Activated CD8-positive, alpha-beta memory T cell treated with anti-CD3 and anti-CD28 coated beads, Interleukin-2, amount 10 ng/mL, durations not matched to agents 7 days and 5 days (primary cell): ENCODE measurements at regions of chr19 and their contacts with region 1.

Region 1: GRCh38 chr19:12847159-12848139 is 9.1 kb downstream of the MAST1 start:
- DNase-seq: peak; percentile 87
- ATAC-seq: peak; percentile 97
- H3K4me3 Mint-ChIP-seq: peak overlapping the region; percentile 35
- H3K27ac Mint-ChIP-seq: no peak overlapping the region
- H3K4me1 Mint-ChIP-seq: peaks cover 8% of the 10 kb centered on the region
- H3K27me3 Mint-ChIP-seq: peaks cover 22% of the 10 kb centered on the region

Region 2: DNA sequence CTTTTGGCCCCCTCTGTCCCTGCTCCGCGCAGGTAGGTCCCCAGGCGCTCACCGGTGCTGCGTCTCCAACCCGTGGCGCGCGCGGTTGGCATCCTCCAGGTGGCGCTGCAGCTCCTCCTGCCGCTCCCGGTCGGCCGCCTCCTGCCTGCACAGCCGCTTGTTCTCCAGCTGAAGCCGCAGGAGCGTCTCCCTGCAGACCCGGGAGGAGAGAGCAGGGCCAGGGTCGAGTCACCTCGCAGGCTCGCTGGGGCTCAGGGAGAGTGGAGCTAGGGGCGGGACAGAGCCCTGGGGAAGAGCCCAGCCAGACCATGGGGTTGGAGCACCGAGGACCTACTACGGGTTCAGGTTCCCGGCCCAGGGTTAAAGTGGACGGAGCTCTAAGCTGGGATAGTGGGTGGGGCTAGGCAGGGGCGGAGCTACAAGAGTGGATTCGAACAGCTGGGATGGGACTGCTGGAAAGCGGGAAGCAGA is 81.4 kb before region 1 on chr19:
- CTCF ChIA-PET with region 1: interaction called, 146 read pairs
- DNase-seq: peak; percentile 87
- ATAC-seq: peak; percentile 87
- H3K4me3 Mint-ChIP-seq: peak overlapping the region; percentile 24
- H3K27ac Mint-ChIP-seq: no peak overlapping the region
- H3K4me1 Mint-ChIP-seq: peaks cover 9% of the 10 kb centered on the region
- H3K27me3 Mint-ChIP-seq: no peaks in the 10 kb centered on the region

Region 3: DNA sequence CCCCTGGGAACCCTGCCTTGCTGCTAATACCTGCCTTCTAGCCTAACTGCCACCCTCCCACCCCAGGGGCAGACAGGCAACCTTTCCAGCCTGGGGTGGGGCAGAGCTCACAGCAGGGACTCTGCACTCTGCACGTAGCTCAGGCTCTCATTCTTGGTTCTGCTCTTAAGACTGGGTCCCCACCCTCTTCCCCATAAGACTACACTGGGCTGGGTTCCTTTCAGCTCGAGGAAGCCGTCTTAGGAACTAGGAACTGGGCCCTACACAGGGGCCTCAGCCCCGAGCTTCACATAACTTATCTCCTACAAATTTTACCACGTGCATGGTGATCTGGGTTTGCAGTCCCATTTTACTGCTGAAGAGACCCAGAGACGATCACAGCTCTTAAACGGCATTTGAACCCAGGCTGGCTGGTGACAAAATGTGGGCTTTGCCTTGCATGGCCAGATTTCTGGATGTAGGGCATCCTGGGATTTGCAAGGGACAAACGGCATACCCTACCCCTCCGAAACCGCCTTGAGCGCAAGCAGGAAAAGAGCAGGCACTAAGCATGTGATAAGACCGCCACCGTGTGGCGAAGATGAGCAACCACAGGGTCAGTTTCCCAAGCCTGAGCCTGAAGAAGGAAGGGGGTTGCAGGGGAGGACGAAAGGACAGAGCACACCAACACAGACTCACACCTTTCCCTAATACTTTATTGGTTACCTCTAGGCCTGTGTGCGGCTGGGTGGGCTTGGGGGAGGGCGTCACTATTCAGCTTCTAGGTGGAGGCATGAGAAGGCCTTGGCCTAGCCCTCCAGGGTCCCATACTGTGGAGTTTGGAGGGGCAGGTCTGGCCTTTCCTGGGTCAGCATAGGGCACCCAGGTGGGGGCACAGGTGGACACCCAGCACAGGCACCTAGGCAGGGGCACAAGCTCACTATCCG is 51.0 kb before region 1 on chr19:
- CTCF ChIA-PET with region 1: interaction called, 18 read pairs
- DNase-seq: peak; percentile 82
- ATAC-seq: no peak
- H3K4me3 Mint-ChIP-seq: peak overlapping the region; percentile 51
- H3K27ac Mint-ChIP-seq: peak overlapping the region; percentile 81
- H3K4me1 Mint-ChIP-seq: peaks cover 35% of the 10 kb centered on the region
- H3K27me3 Mint-ChIP-seq: no peaks in the 10 kb centered on the region

Region 4: DNA sequence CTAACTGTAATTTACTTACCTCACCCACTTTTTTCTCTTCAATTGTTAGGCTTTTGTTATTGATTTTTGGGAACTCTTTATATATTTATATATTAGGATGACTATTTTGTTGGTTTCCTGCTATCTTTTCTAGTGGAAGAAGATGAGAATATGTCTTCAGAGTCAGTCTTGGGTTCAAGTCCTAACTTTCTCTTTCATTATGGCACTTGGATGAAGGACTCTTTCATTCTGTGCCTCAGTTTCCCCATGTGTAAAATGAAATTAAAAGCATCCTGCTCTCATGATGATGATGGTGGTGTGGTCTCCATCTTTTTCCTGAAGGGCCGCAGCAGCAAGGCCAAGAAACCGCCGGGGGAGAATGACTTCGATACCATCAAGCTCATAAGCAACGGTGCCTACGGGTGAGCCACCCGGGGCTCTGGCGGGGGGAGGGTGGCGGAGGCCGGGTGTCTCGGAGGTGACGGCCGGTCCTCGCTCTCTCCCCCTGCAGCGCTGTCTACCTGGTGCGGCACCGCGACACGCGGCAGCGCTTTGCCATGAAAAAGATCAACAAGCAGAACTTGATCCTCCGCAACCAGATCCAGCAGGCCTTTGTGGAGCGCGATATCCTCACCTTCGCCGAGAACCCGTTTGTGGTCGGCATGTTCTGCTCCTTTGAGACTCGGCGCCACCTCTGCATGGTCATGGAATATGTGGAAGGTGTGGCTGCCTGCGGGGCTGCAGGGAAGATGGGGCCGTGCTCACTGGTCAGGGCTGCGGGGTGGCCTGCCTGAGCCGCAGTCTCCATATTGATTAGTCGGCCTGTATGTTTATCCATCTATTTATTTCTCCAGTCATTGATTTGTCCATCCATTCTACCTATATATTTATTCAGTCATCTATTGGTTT is 10.8 kb after region 1 on chr19:
- CTCF ChIA-PET with region 1: interaction called, 24 read pairs
- DNase-seq: no peak
- ATAC-seq: no peak
- H3K4me3 Mint-ChIP-seq: no peak overlapping the region
- H3K27ac Mint-ChIP-seq: no peak overlapping the region
- H3K4me1 Mint-ChIP-seq: no peaks in the 10 kb centered on the region
- H3K27me3 Mint-ChIP-seq: peaks cover 2% of the 10 kb centered on the region

Region 5: DNA sequence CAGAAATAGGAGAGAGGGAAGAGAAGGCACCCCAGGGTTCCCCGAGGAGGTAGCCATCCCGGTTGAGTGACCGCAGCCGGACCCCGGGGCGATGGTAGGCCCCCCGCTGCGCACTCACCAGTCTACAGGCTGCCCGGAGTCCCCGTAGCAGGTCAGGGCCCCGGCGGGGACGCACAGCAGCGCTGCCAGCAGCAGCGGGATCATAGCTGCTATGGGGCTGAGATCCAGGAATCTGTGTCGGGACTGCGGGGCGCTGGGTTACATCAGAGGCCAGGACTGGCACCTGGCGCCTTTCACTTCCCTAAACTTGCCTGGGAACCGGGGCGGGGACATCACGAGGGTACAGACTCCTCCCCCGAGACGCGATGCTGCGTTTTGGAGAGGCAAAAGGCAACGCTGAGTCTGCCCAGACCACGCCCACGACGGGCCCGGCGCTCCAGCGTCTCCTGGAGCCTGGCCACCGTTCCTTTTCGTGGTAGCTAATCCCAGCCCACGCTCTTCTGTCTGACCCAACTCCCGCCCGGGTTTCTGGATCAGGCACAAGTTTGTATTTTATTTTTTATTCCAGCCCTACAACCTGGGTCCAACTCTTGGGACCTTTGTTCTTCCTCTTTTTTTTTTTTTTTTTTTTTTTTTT is 33.8 kb after region 1 on chr19 and contains the start of gene DNASE2:
- CTCF ChIA-PET with region 1: interaction called, 21 read pairs
- DNase-seq: peak; percentile 96
- ATAC-seq: peak; percentile 83
- H3K4me3 Mint-ChIP-seq: peak within 1 kb of the TSS; percentile 87
- H3K27ac Mint-ChIP-seq: peak within 1 kb of the TSS; percentile 87
- H3K4me1 Mint-ChIP-seq: peaks cover 38% of the 10 kb centered on the region
- H3K27me3 Mint-ChIP-seq: no peaks in the 10 kb centered on the region
- total RNA-seq, gene DNASE2: 32.5 to 34.1 TPM

Region 6: DNA sequence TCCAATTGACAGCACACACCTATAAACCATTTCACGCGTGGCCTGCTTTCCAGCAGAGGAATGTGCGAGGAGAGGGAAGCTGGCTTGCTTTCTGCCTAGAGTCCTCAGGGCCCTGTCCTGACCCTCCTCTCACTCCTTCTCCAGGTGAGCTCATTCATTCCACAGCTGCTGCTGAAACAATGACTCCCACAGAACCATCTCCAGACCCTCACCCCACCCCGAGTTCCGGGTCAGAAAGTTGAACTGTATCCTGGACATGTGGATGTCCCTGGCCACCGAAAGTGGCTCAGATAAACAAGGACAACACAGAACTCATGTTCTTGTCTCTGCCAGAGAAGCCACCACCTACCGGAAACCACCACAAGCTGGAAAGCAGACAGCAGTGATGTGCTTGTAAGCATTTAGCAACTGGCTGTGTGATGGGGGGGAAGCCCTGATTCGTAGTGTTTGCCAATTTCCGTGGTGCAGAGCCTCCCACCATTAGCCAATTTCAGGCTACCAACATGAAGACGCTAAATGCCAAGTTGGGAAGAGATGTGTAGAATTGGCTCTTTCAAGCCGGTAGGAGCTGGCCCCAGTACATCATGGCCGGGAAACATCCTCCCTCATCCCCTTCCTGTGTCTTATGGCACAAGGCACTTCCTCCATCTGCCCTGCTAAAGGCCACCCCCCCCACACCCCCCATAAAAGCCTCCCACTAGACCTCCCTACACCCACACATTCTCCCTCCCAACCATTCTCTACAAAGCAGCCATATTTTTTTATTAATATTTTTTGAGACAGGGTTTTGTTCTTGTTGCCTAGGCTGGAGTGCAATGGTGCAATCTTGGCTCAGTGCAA is 66.6 kb after region 1 on chr19:
- CTCF ChIA-PET with region 1: no interaction called
- DNase-seq: peak; percentile 84
- ATAC-seq: peak; percentile 81
- H3K4me3 Mint-ChIP-seq: peak overlapping the region; percentile 32
- H3K27ac Mint-ChIP-seq: peak overlapping the region; percentile 88
- H3K4me1 Mint-ChIP-seq: peaks cover 40% of the 10 kb centered on the region
- H3K27me3 Mint-ChIP-seq: no peaks in the 10 kb centered on the region

Region 7: DNA sequence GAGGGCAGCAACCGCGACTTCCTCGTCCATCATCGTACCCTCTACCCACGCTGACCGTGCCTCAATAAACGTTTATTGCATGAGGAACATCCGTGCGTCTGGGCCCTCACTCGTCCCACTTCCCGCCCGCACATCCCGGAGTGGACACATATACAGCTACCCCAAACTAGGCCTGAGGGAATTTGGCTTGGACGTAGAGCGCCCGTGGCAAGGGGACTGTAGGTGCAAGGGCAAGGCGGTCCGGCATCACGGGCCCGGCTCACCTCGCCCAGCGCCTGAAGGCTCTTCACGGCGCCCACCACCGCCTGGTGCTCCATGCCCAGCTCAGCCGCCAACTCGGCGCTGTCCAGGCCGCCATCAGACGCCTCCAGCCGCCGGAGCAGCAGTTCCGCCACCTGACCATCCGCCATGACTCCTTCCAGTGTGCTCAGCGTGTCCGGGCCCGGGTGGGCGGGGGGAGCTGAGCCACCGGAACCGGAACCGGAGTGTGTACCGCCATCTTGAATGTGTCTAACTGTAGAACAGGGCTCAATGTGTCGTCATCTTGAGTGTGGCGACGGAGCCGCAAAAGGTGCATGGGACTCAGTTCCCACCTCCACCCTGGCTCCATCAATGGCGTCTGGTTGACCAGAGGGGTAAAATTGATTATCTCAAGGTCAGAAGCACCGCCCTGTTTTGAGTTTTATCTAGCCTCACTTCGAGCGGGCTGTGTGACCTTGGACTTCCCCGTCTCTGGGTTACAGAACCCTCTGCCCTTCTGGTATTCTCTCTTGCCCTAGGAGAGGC is 86.0 kb after region 1 on chr19 and contains the start of gene FARSA:
- CTCF ChIA-PET with region 1: no interaction called
- DNase-seq: peak; percentile 96
- ATAC-seq: peak; percentile 63
- H3K4me3 Mint-ChIP-seq: peak within 1 kb of the TSS; percentile 92
- H3K27ac Mint-ChIP-seq: peak within 1 kb of the TSS; percentile 88
- H3K4me1 Mint-ChIP-seq: peaks cover 42% of the 10 kb centered on the region
- H3K27me3 Mint-ChIP-seq: no peaks in the 10 kb centered on the region
- total RNA-seq, gene FARSA: 96.6 to 131 TPM